GM12878 (cell line): ENCODE measurements at regions of chr9 and their contacts with region 1.

Region 1: DNA sequence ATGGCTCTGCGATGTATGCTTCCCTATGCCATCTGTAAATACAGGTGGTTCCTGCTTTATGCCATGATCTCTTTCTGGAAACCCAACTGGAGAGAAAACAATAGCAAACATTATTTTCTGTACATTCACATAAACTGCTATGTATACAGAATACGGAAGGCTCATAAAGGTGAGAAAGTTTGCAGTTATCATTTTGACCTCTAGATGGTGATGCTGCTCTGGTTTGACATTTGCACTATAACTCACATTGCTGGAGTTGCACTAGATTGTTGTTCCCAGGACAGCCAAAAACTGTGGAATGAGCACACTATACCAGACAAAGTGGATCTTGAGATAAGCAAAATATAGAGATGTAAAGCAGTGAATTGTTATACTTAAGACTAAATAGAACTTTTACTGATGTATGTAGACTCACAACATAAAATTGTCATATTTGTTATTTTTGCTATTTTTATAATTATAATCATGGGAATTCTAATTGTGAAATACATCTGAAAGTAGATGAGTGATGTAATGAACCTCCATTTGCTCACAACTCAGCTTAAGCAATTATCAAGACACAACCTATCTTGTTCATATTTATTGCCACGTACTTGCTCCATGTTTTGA is 246.5 kb downstream of the PTPRD start:
- DNase-seq: peak; percentile 13
- ATAC-seq: peak; percentile 89
- H3K4me3 ChIP-seq: no peak overlapping the region
- H3K27ac ChIP-seq: no peak overlapping the region
- H3K4me1 ChIP-seq: no peaks in the 10 kb centered on the region
- H3K27me3 ChIP-seq: no peaks in the 10 kb centered on the region
- CTCF ChIP-seq: peak; percentile 56 to 80 (median 63)
- EP300 ChIP-seq: no peak
- POLR2A ChIP-seq: no peak
- RAD21 ChIP-seq: peak; percentile 82

Region 2: DNA sequence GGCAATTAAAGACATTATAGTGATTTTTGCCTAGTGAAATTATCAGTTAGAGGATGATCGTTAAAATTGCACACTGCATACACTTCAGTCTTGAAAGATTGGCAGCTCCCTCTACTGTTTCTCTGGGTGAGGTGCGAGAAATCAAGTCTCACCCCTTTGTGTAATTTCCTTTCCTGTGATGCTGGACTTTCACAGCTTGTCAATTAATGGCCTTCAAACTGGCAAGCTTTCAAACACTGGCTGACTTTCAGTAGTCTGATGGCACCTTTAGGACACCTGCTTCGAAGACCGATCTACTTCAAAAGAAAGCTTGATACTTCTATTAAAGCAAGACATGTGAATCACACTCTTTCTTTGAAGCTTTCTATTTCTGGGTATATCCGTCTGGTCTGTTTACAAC is 953.3 kb after region 1 on chr9:
- CTCF ChIA-PET with region 1: interaction called, 3 read pairs
- POLR2A ChIA-PET with region 1: no interaction called
- RAD21 ChIA-PET with region 1: no interaction called
- SMC1A ChIA-PET with region 1: no interaction called
- in situ Hi-C with region 1: no loop called
- intact Hi-C with region 1: loop called (anchors 5 kb)
- DNase-seq: no peak
- ATAC-seq: peak; percentile 69
- H3K4me3 ChIP-seq: no peak overlapping the region
- H3K27ac ChIP-seq: no peak overlapping the region
- H3K4me1 ChIP-seq: no peaks in the 10 kb centered on the region
- H3K27me3 ChIP-seq: no peaks in the 10 kb centered on the region
- CTCF ChIP-seq: peak; percentile 25 to 53 (median 34); a peak in 4 of 6 replicates
- EP300 ChIP-seq: no peak
- POLR2A ChIP-seq: no peak
- RAD21 ChIP-seq: peak; percentile 40

Region 3: GRCh38 chr9:12329623-12329985 is 1963.3 kb after region 1 on chr9:
- CTCF ChIA-PET with region 1: interaction called, 4 read pairs
- POLR2A ChIA-PET with region 1: no interaction called
- RAD21 ChIA-PET with region 1: interaction called, 6 read pairs
- SMC1A ChIA-PET with region 1: no interaction called
- in situ Hi-C with region 1: loop called (anchors 25 kb)
- intact Hi-C with region 1: loop called (anchors 5 kb)
- DNase-seq: no peak
- ATAC-seq: no peak
- H3K4me3 ChIP-seq: no peak overlapping the region
- H3K27ac ChIP-seq: no peak overlapping the region
- H3K4me1 ChIP-seq: no peaks in the 10 kb centered on the region
- H3K27me3 ChIP-seq: no peaks in the 10 kb centered on the region
- CTCF ChIP-seq: no peak
- EP300 ChIP-seq: no peak
- POLR2A ChIP-seq: no peak
- RAD21 ChIP-seq: no peak